ENCODE measurements at regions of chr10 and their contacts with region 1.

Region 1: DNA sequence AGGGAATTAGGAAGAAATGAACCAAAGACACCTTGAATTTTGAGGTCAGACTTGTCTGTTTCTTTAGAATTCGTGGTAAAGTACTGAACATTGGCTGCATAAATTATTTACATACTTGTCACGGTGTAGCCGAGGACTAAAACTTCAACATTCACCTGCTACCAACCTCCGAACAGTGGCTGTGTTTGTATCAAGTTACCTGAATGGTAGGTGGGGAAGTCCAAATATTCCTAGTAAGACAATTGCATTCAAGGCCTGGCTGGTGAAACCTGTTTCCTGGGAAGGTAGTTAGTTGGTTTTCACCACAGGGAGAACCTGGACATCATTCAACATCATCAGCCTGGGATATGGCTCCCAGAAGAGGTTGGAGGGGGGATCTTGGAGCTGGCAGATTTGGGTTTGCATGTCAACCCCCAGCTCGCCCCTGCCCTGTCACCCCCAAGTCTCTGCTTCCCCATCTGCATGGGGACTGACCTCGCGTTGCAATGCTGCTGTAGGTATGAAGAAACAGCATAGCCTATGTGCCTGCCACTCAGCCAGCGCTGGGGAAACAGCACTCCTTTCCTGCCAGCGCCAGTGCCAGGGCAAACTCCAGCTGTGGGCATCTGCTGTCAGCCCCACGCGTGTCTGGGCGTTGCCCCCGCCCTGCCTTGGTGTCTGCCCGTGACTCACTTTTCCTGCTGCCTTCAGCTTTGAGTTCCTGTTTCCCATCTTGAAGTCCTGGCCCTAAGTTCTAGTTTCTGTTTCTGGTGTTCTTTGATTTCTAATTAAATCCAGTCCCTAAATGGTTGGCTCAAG is 12.7 kb upstream of the LARP4B start:
- DNase-seq: peak; percentile 39
- CTCF ChIP-seq: no peak

Region 2: GRCh38 chr10:873020-873419 is 71.2 kb before region 1 on chr10:
- CTCF ChIA-PET with region 1: no interaction called
- POLR2A ChIA-PET with region 1: no interaction called
- DNase-seq: no peak
- CTCF ChIP-seq: no peak

Region 3: GRCh38 chr10:955820-956217 is 11.6 kb after region 1 on chr10:
- CTCF ChIA-PET with region 1: interaction called, 11 read pairs
- POLR2A ChIA-PET with region 1: no interaction called
- DNase-seq: no peak
- CTCF ChIP-seq: no peak